HEK293T (cell line): ENCODE measurements at regions of chr15 and their contacts with region 1.

Region 1: GRCh38 chr15:71386448-71387236 is 271.4 kb downstream of the THSD4 start:
- DNase-seq: no peak

Region 2: DNA sequence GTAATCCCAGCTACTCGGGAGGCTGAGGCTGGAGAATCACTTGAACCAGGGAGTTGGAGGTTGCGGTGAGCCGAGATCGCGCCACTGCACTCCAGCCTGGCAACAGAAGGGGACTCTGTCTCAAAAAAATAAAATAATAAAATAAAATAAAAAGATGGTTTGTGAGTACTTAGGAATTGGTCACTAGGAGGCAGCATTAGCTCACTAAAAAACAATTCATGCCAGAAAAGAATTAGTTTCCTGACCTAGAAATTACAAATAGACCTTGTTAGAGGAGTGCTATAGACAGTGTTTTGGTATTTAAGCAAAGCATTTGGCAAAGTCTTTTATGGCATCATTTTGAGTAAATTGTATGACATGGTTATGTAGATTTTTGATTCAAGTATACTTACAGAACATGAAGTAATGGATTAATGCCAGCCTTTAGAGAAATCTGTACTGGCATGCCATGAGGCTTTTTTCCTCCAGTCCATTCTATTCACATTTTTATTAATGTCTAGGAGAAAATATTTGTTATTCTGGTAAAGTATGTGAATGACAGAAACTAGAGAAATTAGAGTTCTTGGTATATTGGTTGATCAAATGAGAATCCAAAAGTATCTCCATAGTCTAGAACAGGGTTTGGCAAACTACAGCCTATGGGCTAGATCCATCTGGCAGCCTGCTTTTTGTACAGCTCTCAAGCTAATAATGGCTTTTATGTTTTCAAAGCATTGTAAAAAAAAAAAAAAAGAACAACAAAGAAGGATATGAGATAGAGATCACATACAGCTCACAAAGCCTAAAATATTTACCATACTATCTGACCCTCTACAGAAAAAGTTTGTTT is 412.4 kb before region 1 on chr15:
- CTCF ChIA-PET with region 1: no interaction called
- POLR2A ChIA-PET with region 1: no interaction called
- DNase-seq: peak; percentile 8

Region 3: DNA sequence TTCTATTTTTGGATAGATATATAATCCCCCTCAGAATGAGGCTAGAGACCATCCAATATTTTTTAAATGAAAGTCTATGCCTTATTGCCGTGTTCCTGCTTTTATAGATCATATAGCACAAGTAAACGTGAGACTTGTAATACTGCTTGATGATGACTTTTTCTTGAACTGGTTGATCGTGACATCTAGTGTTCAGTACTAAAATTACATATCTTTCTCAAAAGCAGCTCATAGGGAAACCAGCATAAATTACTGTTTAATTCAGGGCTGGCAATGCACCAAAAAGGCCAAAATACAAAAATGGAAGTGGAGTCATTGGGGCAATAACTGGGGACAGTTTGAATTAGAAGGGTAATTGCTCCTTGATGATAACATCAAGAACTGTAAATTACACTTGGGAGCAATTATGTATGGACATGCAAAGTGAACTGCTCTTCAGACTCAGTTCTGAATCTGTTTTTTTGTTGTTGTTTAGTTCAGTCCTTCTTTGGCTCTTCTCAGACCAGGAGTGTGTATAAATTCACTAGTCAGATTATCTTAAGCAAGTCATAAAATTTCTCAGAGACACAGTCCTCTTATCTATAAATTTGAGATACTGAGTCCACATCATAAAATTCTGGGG is 54.0 kb after region 1 on chr15:
- CTCF ChIA-PET with region 1: interaction called, 12 read pairs
- POLR2A ChIA-PET with region 1: no interaction called
- DNase-seq: peak; percentile 37